MCF 10A (cell line): ENCODE measurements at regions of chr6 and their contacts with region 1.

Region 1: GRCh38 chr6:26025894-26026832 is 61.1 kb upstream of the HFE start:
- DNase-seq: peak; percentile 96
- H3K4me3 Mint-ChIP-seq: peak overlapping the region; percentile 83
- H3K27ac Mint-ChIP-seq: peak overlapping the region; percentile 84
- H3K4me1 Mint-ChIP-seq: peaks cover 17% of the 10 kb centered on the region
- H3K27me3 Mint-ChIP-seq: no peaks in the 10 kb centered on the region
- CTCF ChIP-seq: peak; percentile 81

Region 2: GRCh38 chr6:25866011-25866410 is 160.2 kb before region 1 on chr6:
- CTCF ChIA-PET with region 1: no interaction called
- POLR2A ChIA-PET with region 1: no interaction called
- intact Hi-C with region 1: no loop called
- DNase-seq: no peak
- H3K4me3 Mint-ChIP-seq: no peak overlapping the region
- H3K27ac Mint-ChIP-seq: no peak overlapping the region
- H3K4me1 Mint-ChIP-seq: no peaks in the 10 kb centered on the region
- H3K27me3 Mint-ChIP-seq: peaks cover 19% of the 10 kb centered on the region
- CTCF ChIP-seq: no peak

Region 3: DNA sequence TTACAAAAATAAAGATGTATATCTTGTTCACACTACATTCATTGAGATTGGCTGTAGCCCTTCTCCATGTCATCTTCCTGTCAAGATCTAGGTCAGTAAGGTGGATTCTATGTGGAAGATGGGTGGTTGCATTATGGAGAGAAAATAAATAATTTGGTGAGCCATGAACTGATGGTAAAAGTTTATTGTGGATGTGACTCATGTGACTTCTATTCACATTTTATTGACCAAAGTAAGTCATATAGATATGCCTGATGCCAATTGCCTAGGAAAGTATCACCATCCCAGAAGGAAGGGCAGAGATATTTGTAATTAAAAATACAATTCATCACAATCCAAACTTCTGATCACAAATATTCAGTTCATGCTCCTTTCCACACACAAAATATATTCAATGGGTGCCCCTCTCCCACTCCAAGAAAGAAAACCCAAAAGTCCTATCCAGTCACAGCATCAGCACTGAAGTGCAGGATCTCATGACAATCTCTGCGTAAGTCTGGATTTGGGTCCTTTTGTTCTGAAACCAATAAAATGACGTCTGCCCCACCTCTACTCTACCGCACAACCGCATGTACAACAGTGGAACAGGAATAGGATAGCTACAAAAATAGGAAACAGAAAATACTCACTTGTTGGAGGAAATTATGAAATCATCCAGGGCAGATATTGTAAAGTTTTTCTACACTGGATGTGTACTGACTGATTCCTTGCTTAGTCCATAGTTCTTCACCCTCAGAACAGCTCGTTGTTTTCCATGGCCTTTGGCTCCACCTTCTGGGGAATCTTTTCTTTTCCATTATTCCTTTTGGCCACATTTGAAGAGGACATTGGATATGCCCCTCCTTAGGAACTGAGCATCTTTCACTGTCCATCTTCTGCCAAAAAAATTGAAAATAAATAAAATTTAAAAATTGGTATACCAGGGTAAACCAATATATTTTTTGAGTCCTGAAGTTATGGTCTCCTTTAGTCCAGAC is 136.0 kb before region 1 on chr6:
- CTCF ChIA-PET with region 1: no interaction called
- POLR2A ChIA-PET with region 1: no interaction called
- intact Hi-C with region 1: no loop called
- DNase-seq: peak; percentile 75
- H3K4me3 Mint-ChIP-seq: no peak overlapping the region
- H3K27ac Mint-ChIP-seq: no peak overlapping the region
- H3K4me1 Mint-ChIP-seq: no peaks in the 10 kb centered on the region
- H3K27me3 Mint-ChIP-seq: no peaks in the 10 kb centered on the region
- CTCF ChIP-seq: peak; percentile 60

Region 4: DNA sequence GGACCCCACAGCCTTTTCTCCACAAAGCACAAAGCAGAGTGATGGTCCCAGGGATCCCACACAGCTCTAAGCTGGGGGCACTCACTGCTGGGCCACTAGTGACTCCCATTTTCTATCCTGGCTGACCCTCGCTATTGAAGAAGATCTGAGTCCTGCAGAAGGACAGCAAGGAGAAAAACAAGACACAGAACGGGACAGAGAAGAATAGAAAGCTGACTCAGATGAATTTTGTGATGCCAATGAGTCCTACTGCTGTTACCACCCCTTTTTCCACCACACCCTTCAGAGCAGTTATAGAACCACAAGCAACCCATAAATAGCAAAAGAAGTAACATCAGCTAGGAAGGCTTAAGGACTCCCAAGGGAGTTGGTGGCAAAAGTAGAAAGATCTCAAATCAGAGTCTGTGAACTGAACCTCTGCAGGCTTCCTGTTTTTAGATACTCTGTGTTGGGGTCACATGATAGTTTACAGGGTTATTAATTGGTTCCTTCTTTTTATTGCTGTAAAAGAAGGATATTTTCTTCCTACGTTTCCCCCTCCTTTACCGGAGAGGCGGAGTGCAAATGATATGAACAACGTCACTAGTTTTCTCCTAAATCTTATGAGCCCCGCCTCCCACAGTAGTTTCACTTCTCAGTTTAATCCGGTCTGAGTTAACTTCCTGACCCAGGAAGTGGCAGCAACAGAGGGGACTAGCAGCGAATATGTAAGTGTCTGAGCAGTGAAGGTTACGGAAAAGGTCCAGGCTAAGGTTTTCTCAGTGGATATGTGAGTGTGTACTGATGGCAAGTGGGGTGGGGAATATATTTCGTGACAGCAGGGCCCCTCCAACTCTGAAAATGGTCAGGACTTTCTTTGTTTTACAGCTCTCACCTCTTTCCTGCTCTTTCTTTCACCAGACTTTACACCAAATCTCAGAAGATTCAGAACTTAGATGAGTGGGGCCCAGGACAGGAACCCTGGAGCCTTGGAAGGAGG is 63.7 kb before region 1 on chr6 and contains the start of gene TRIM38:
- CTCF ChIA-PET with region 1: no interaction called
- POLR2A ChIA-PET with region 1: interaction called, 12 read pairs
- intact Hi-C with region 1: no loop called
- DNase-seq: peak; percentile 90
- H3K4me3 Mint-ChIP-seq: peak within 1 kb of the TSS; percentile 83
- H3K27ac Mint-ChIP-seq: peak within 1 kb of the TSS; percentile 98
- H3K4me1 Mint-ChIP-seq: peaks cover 47% of the 10 kb centered on the region
- H3K27me3 Mint-ChIP-seq: no peaks in the 10 kb centered on the region
- CTCF ChIP-seq: no peak
- total RNA-seq, gene TRIM38: 5.4 and 6.7 TPM in 2 replicates

Region 5: GRCh38 chr6:26012061-26012460 is 14.1 kb before region 1 on chr6:
- CTCF ChIA-PET with region 1: interaction called, 21 read pairs
- POLR2A ChIA-PET with region 1: interaction called, 232 read pairs
- intact Hi-C with region 1: no loop called
- DNase-seq: no peak
- H3K4me3 Mint-ChIP-seq: no peak overlapping the region
- H3K27ac Mint-ChIP-seq: no peak overlapping the region
- H3K4me1 Mint-ChIP-seq: no peaks in the 10 kb centered on the region
- H3K27me3 Mint-ChIP-seq: no peaks in the 10 kb centered on the region
- CTCF ChIP-seq: no peak

Region 6: DNA sequence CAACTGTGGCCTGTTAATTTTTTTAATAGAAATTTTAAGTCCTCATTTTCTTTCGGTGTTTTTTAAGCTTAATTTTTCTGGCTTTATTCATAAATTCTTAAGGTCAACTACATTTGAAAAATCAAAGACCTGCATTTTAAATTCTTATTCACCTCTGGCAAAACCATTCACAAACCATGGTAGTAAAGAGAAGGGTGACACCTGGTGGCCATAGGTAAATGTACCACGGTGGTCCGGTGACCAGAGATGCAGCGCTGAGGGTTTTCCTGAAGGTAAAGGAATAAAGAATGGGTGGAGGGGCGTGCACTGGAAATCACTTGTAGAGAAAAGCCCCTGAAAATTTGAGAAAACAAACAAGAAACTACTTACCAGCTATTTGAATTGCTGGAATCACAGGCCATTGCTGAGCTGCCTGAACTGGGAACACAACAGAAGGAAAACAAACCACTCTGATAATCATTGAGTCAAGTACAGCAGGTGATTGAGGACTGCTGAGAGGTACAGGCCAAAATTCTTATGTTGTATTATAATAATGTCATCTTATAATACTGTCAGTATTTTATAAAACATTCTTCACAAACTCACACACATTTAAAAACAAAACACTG is 71.2 kb after region 1 on chr6:
- CTCF ChIA-PET with region 1: interaction called, 20 read pairs
- POLR2A ChIA-PET with region 1: interaction called, 51 read pairs
- intact Hi-C with region 1: no loop called
- DNase-seq: peak; percentile 74
- H3K4me3 Mint-ChIP-seq: no peak overlapping the region
- H3K27ac Mint-ChIP-seq: no peak overlapping the region
- H3K4me1 Mint-ChIP-seq: no peaks in the 10 kb centered on the region
- H3K27me3 Mint-ChIP-seq: no peaks in the 10 kb centered on the region
- CTCF ChIP-seq: peak; percentile 75

Region 7: GRCh38 chr6:26196846-26197648 is 170.9 kb after region 1 on chr6:
- CTCF ChIA-PET with region 1: interaction called, 4 read pairs
- POLR2A ChIA-PET with region 1: interaction called, 238 read pairs
- intact Hi-C with region 1: no loop called
- DNase-seq: peak; percentile 94
- H3K4me3 Mint-ChIP-seq: peak overlapping the region; percentile 93
- H3K27ac Mint-ChIP-seq: peak overlapping the region; percentile 96
- H3K4me1 Mint-ChIP-seq: peaks cover 28% of the 10 kb centered on the region
- H3K27me3 Mint-ChIP-seq: no peaks in the 10 kb centered on the region
- CTCF ChIP-seq: no peak

Region 8: GRCh38 chr6:26270903-26271667 is 244.9 kb after region 1 on chr6:
- CTCF ChIA-PET with region 1: no interaction called
- POLR2A ChIA-PET with region 1: interaction called, 42 read pairs
- intact Hi-C with region 1: no loop called
- DNase-seq: peak; percentile 97
- H3K4me3 Mint-ChIP-seq: no peak overlapping the region
- H3K27ac Mint-ChIP-seq: peak overlapping the region; percentile 54
- H3K4me1 Mint-ChIP-seq: peaks cover 6% of the 10 kb centered on the region
- H3K27me3 Mint-ChIP-seq: no peaks in the 10 kb centered on the region
- CTCF ChIP-seq: no peak

Region 9: GRCh38 chr6:27838058-27838944 is 1812.1 kb after region 1 on chr6:
- CTCF ChIA-PET with region 1: interaction called, 5 read pairs
- POLR2A ChIA-PET with region 1: interaction called, 51 read pairs
- intact Hi-C with region 1: no loop called
- DNase-seq: peak; percentile 98
- H3K4me3 Mint-ChIP-seq: no peak overlapping the region
- H3K27ac Mint-ChIP-seq: no peak overlapping the region
- H3K4me1 Mint-ChIP-seq: peaks cover 32% of the 10 kb centered on the region
- H3K27me3 Mint-ChIP-seq: no peaks in the 10 kb centered on the region
- CTCF ChIP-seq: no peak